Dendritic cell treated with granulocyte-macrophage colony-stimulating factor and Interleukin-4, amounts not matched to agents 40 ng/mL and 50 ng/mL, for 4 days (primary cell): ENCODE measurements at regions of chr2 and their contacts with region 1.

Region 1: DNA sequence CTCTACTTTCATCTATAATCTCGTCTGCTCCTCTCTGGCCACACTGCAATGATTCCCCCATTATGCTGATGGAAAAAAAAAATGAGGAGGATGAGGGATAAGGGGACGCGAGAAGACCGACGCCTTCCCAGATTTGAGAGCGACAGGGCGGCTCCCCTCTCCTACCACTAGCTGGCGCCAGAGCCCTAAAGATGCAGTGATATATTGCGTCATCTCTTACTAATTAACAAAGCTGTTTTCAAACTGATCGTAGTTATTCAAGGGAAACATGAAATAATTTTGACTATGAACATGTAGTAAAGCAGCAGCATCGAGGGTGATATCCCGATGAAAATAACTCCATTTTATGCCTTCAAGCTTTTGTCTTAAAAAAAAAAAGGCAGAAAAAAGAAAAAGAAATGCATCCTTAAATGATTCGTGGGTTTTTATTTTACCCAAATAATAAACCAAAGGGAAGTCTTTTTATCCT is 48.0 kb upstream of the HNRNPA3 start:
- H3K4me3 Mint-ChIP-seq: no peak overlapping the region
- H3K27ac Mint-ChIP-seq: no peak overlapping the region
- H3K4me1 Mint-ChIP-seq: peaks cover 12% of the 10 kb centered on the region
- H3K27me3 Mint-ChIP-seq: no peaks in the 10 kb centered on the region

Region 2: GRCh38 chr2:177212106-177212890 is 47.7 kb after region 1 on chr2 and contains the start of gene HNRNPA3:
- intact Hi-C with region 1: loop called (anchors 2 kb)
- H3K4me3 Mint-ChIP-seq: peak within 1 kb of the TSS; percentile 85
- H3K27ac Mint-ChIP-seq: peak within 1 kb of the TSS; percentile 99
- H3K4me1 Mint-ChIP-seq: peaks cover 27% of the 10 kb centered on the region
- H3K27me3 Mint-ChIP-seq: no peaks in the 10 kb centered on the region

Region 3: DNA sequence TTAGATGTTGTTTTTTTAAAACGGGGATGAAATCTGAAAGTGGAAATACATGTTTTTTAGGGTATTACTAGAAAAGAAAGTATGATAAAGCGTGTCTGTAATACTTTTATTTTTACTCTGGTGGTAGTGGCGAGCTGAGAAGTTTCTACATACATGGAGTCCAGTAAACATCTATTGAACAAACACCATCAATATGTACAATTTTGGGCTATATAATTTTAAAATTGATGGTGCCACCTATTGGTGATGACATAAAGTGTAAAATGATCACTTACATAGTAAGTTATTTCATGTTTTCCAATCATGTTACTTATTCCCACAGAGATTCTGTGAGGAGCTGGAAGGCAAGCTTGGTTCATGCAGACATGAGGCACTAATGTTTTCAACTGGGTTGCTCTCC is 131.4 kb after region 1 on chr2:
- intact Hi-C with region 1: loop called (anchors 1 kb)
- H3K4me3 Mint-ChIP-seq: no peak overlapping the region
- H3K27ac Mint-ChIP-seq: no peak overlapping the region
- H3K4me1 Mint-ChIP-seq: peaks cover under 1% of the 10 kb centered on the region
- H3K27me3 Mint-ChIP-seq: no peaks in the 10 kb centered on the region

Region 4: DNA sequence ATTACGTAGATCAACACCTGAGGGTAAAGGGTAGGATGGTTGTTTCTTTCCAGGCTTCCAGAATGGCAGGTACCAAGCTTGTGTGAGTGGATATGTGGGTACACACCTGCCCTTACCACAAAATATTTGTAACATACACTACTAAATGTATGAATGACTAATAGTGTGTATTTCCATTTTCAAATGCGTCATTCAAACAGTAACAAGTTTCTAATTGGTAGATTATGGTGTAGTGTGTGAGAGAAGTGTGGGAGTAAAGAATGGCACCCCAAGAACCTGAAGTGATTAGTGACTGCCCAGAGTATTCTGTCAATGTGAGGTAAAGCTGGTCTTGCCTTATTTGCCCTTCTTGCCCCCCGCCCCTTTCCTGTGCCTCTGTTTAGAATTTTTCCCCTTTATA is 249.1 kb after region 1 on chr2:
- intact Hi-C with region 1: loop called (anchors 2 kb)
- H3K4me3 Mint-ChIP-seq: no peak overlapping the region
- H3K27ac Mint-ChIP-seq: no peak overlapping the region
- H3K4me1 Mint-ChIP-seq: peaks cover 16% of the 10 kb centered on the region
- H3K27me3 Mint-ChIP-seq: no peaks in the 10 kb centered on the region

Region 5: DNA sequence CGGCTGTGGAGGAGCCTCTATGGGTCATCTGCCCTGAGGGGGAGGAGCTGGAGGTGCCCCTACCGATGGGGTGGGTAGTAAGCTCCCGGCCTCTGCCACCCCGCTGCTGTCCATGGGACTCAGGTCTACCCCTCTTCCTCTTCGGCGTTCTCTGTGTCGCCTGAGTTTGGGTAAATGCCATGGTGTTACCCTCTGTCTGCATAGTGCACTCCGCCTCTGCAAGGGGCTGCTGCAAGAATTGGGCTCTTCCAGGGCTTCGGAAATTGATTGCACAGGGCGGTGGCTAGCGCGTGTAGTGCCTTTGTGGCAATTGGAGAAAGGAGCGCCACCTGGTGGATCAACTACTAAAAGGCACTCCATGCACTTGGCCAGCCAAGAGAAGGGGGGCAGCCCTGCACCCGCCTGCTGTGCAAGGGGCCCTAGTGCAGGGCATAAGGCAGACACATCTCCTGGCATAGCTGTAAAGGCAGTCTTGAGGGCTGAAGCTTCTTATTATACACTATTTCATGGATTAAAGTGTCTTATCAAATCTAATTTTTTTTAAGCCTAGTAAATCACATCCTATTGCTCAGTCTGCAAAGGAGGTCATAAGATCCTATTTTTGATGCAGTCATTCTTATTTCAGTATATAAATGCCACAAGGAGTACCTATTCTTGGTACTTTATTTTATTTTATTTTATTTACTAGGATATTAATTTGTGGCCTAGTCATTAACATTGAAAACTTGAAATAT is 599.1 kb after region 1 on chr2:
- intact Hi-C with region 1: loop called (anchors 10 kb)
- H3K4me3 Mint-ChIP-seq: peak overlapping the region; percentile 27
- H3K27ac Mint-ChIP-seq: no peak overlapping the region
- H3K4me1 Mint-ChIP-seq: peaks cover 6% of the 10 kb centered on the region
- H3K27me3 Mint-ChIP-seq: peaks cover 12% of the 10 kb centered on the region